Natural killer cell (primary cell): ENCODE measurements at regions of chr12 and their contacts with region 1.

Region 1: DNA sequence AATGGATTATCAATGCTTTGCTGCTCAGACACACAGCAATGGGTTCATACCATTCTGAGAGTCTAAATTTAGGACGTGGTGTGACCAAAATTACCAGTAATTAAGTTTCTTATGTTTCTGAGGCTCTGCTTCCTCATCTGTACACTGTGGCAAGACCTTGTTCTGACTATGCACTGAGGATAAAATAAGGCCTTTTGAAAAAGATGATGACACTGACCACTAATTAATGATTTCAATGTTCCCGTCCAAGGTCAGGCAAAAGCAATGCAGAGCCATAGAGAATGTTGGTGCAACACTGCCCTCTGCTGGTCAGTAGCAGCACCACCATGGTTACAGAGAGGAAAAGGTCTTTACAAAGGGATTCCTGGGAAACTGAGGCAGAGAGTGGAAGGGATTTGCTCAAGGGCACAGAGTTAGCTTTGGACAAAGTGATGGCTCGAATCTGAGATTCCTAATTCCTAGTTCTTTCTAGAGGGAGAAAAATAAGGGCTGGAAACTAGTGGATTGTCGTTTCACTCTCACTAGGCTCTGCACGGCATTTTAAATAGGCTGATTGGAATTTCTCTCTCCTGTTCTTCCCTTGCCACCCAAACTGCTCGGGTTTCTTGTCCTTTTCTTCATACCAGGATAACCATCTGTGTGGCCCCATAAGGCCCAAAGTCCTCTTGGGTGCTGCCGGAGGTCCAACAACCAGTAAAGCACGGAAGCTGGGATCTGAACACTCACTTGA is 22.3 kb upstream of the P2RX7 start:
- DNase-seq: peak; percentile 63 to 90
- ATAC-seq: peak; percentile 79 to 92 (median 85)
- H3K4me3 ChIP-seq: no peak overlapping the region
- H3K4me3 Mint-ChIP-seq: no peak overlapping the region
- H3K27ac ChIP-seq: no peak overlapping the region
- H3K27ac Mint-ChIP-seq: peak overlapping the region in 1 of 2 donors; percentile 65
- H3K4me1 ChIP-seq: no peaks in the 10 kb centered on the region
- H3K4me1 Mint-ChIP-seq: peaks cover 6% of the 10 kb centered on the region in 2 donors
- H3K27me3 ChIP-seq: no peaks in the 10 kb centered on the region
- H3K27me3 Mint-ChIP-seq: peaks cover 0 to 3% of the 10 kb centered on the region in 2 donors
- CTCF ChIP-seq: peak; percentile 98

Region 2: GRCh38 chr12:120514002-120514401 is 596.4 kb before region 1 on chr12:
- intact Hi-C with region 1: no loop called
- DNase-seq: no peak
- ATAC-seq: no peak
- H3K4me3 ChIP-seq: no peak overlapping the region
- H3K4me3 Mint-ChIP-seq: no peak overlapping the region
- H3K27ac ChIP-seq: no peak overlapping the region
- H3K27ac Mint-ChIP-seq: no peak overlapping the region
- H3K4me1 ChIP-seq: no peaks in the 10 kb centered on the region
- H3K4me1 Mint-ChIP-seq: peaks cover 0 to 5% of the 10 kb centered on the region in 2 donors
- H3K27me3 ChIP-seq: no peaks in the 10 kb centered on the region
- H3K27me3 Mint-ChIP-seq: no peaks in the 10 kb centered on the region
- CTCF ChIP-seq: no peak

Region 3: GRCh38 chr12:120649442-120650232 is 460.7 kb before region 1 on chr12:
- intact Hi-C with region 1: loop called (anchors 1 kb)
- DNase-seq: no peak
- ATAC-seq: no peak
- H3K4me3 ChIP-seq: no peak overlapping the region
- H3K4me3 Mint-ChIP-seq: no peak overlapping the region
- H3K27ac ChIP-seq: no peak overlapping the region
- H3K27ac Mint-ChIP-seq: no peak overlapping the region
- H3K4me1 ChIP-seq: peaks cover 11% of the 10 kb centered on the region
- H3K4me1 Mint-ChIP-seq: peaks cover 12 to 14% of the 10 kb centered on the region in 2 donors
- H3K27me3 ChIP-seq: peaks cover 8% of the 10 kb centered on the region
- H3K27me3 Mint-ChIP-seq: peaks cover 36% of the 10 kb centered on the region in 2 donors
- CTCF ChIP-seq: peak; percentile 27

Region 4: GRCh38 chr12:120944645-120945231 is 165.6 kb before region 1 on chr12:
- intact Hi-C with region 1: loop called (anchors 1 kb)
- DNase-seq: peak; percentile 57 to 77
- ATAC-seq: peak; percentile 44 to 75 (median 69)
- H3K4me3 ChIP-seq: no peak overlapping the region
- H3K4me3 Mint-ChIP-seq: no peak overlapping the region
- H3K27ac ChIP-seq: no peak overlapping the region
- H3K27ac Mint-ChIP-seq: no peak overlapping the region
- H3K4me1 ChIP-seq: no peaks in the 10 kb centered on the region
- H3K4me1 Mint-ChIP-seq: no peaks in the 10 kb centered on the region
- H3K27me3 ChIP-seq: no peaks in the 10 kb centered on the region
- H3K27me3 Mint-ChIP-seq: no peaks in the 10 kb centered on the region
- CTCF ChIP-seq: peak; percentile 78

Region 5: GRCh38 chr12:121005346-121005815 is 105.0 kb before region 1 on chr12:
- intact Hi-C with region 1: loop called (anchors 1 kb)
- DNase-seq: peak; percentile 45 to 65
- ATAC-seq: peak; percentile 65 to 87 (median 74)
- H3K4me3 ChIP-seq: no peak overlapping the region
- H3K4me3 Mint-ChIP-seq: no peak overlapping the region
- H3K27ac ChIP-seq: no peak overlapping the region
- H3K27ac Mint-ChIP-seq: peak overlapping the region in 1 of 2 donors; percentile 63
- H3K4me1 ChIP-seq: peaks cover 5% of the 10 kb centered on the region
- H3K4me1 Mint-ChIP-seq: peaks cover 0 to 11% of the 10 kb centered on the region in 2 donors
- H3K27me3 ChIP-seq: no peaks in the 10 kb centered on the region
- H3K27me3 Mint-ChIP-seq: no peaks in the 10 kb centered on the region
- CTCF ChIP-seq: peak; percentile 48

Region 6: DNA sequence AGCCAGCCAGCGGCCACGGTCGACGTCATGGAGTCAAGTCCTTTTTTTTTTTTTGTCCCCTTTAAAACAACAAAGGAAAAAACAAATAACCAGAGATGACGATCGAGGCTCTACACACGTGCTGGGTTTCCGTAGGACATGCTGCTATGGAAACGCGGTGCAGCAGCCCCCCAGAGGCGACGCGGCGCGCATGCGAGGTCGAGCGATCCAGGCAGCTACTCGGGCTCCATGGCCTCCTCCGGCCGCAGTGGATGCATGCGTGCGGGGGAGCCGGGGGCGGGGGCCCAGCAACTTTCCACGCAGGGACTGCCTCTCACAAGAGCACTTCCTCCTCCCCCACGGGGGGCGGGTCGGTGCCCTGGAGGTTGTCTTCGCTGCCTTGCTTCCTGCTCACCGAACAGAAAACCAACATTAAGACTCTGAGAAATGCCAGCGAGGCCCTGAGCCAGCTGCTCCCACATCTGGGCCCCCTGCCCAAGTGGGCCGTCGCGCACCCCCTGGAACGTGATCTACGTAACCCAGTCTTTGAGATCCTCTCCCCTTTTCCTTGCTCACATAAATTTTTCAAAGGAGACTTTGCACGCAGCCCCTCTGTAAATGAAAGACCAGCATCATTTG is 130.2 kb after region 1 on chr12:
- intact Hi-C with region 1: no loop called
- DNase-seq: peak; percentile 90 to 97
- ATAC-seq: peak; percentile 90 to 95 (median 92)
- H3K4me3 ChIP-seq: peak overlapping the region; percentile 32
- H3K4me3 Mint-ChIP-seq: peak overlapping the region; percentile 86
- H3K27ac ChIP-seq: peak overlapping the region; percentile 84
- H3K27ac Mint-ChIP-seq: peak overlapping the region; percentile 97 to 98
- H3K4me1 ChIP-seq: peaks cover 37% of the 10 kb centered on the region
- H3K4me1 Mint-ChIP-seq: peaks cover 29 to 30% of the 10 kb centered on the region in 2 donors
- H3K27me3 ChIP-seq: no peaks in the 10 kb centered on the region
- H3K27me3 Mint-ChIP-seq: no peaks in the 10 kb centered on the region
- CTCF ChIP-seq: no peak